Activated naive CD4-positive, alpha-beta T cell treated with anti-CD3 and anti-CD28 coated beads for 36 hours (primary cell): ENCODE measurements at regions of chr12 and their contacts with region 1.

Region 1: GRCh38 chr12:12724661-12725545 is 7.7 kb downstream of the CDKN1B start:
- DNase-seq: peak; percentile 94
- H3K4me3 Mint-ChIP-seq: peak overlapping the region; percentile 85
- H3K27ac Mint-ChIP-seq: peak overlapping the region; percentile 98
- H3K4me1 Mint-ChIP-seq: peaks cover 51% of the 10 kb centered on the region
- H3K27me3 Mint-ChIP-seq: no peaks in the 10 kb centered on the region

Region 2: DNA sequence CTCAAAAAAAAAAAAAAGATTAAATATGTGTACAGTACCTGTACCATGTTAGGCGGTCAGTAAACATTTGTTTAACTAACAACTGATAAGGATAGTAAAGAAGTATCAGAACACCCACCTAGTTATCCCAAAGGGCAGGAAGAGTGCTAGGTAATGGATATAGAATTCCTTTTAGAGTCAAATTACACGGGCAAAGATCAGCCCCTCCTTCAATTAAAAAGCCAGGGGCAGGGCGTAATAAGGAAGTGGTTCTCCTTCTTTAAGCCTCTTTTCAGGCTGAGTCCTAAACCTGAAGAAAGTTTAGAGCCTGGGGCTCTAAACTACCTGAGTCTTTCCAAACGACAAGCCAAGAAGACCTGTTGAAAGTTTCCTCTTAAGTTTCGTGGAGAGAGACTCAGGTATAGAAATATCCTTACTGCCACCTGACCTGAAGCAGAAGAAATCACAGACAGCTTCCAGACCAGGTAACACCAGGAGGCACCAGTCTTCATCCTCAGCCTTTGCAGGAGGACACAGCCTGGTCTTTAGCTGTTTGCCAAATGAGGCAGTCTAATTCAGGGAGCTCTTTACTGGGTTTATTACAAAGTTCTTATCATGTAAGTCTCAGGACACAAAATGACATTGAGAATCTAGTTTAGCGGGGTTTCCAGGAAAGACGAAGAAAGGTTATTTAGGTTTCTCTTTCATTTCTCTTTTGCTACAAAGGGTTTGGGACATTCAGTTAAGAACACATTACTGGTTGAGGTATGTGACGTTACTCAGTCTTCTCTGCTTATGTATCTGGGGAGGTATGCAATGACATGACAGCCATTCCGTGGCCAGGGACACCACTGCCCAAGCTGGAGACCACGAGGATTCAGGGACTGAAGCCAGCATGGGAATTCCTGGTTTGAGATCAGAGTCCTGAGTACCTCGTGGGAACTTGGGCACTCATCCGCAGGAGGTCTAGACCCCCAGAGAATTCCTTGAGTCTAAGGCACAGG is 653.9 kb before region 1 on chr12 and contains the start of gene BCL2L14:
- CTCF ChIA-PET with region 1: no interaction called
- intact Hi-C with region 1: no loop called
- DNase-seq: peak; percentile 52
- H3K4me3 Mint-ChIP-seq: peak within 1 kb of the TSS; percentile 85
- H3K27ac Mint-ChIP-seq: peak within 1 kb of the TSS; percentile 90
- H3K4me1 Mint-ChIP-seq: peaks cover 36% of the 10 kb centered on the region
- H3K27me3 Mint-ChIP-seq: no peaks in the 10 kb centered on the region
- total RNA-seq, gene BCL2L14: 19.4 to 21.8 TPM

Region 3: GRCh38 chr12:12521044-12521485 is 203.8 kb before region 1 on chr12:
- CTCF ChIA-PET with region 1: no interaction called
- intact Hi-C with region 1: no loop called
- DNase-seq: no peak
- H3K4me3 Mint-ChIP-seq: no peak overlapping the region
- H3K27ac Mint-ChIP-seq: no peak overlapping the region
- H3K4me1 Mint-ChIP-seq: peaks cover 15% of the 10 kb centered on the region
- H3K27me3 Mint-ChIP-seq: no peaks in the 10 kb centered on the region

Region 4: DNA sequence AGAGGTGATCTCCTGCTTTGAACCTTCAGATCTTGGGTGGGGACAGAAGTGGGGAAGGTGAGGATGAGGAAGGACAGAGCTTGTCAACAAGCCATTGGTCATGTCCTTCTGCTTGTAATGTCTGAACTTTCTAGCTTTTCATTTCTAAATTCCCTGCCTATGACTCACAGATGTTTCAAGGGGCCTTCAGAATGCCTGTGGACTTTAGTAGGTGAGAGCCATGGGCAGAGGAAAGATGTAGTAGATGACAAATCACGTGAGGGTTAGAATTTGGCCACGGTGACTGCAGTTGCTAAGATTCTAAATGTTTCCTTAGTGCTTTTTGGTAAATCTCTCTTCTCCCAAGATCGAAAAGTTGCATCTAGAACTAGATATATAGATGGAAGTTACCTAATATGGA is 132.0 kb before region 1 on chr12:
- CTCF ChIA-PET with region 1: no interaction called
- intact Hi-C with region 1: no loop called
- DNase-seq: no peak
- H3K4me3 Mint-ChIP-seq: no peak overlapping the region
- H3K27ac Mint-ChIP-seq: no peak overlapping the region
- H3K4me1 Mint-ChIP-seq: peaks cover 4% of the 10 kb centered on the region
- H3K27me3 Mint-ChIP-seq: peaks cover 2% of the 10 kb centered on the region

Region 5: DNA sequence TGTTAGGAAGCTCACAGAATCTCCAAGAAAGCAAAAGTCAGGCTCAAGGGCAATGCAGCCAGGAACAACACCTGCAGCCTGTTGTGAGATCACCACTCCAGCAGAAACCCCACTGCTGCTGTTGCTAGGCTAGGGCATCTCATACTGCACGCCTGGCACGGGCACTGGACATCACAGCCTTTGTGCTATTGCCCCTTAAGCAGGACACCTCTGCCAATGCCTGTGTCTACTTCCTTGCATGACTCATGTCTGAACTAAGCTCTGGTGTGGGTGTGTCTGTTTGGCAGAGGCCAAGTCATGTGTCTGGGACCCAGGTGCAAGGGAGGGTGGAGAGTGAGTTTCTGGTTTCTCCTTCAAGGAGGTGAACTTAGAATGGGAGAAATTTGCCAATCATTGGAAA is 78.3 kb after region 1 on chr12:
- CTCF ChIA-PET with region 1: no interaction called
- intact Hi-C with region 1: loop called (anchors 1 kb)
- DNase-seq: peak; percentile 61
- H3K4me3 Mint-ChIP-seq: no peak overlapping the region
- H3K27ac Mint-ChIP-seq: no peak overlapping the region
- H3K4me1 Mint-ChIP-seq: peaks cover 53% of the 10 kb centered on the region
- H3K27me3 Mint-ChIP-seq: no peaks in the 10 kb centered on the region

Region 6: DNA sequence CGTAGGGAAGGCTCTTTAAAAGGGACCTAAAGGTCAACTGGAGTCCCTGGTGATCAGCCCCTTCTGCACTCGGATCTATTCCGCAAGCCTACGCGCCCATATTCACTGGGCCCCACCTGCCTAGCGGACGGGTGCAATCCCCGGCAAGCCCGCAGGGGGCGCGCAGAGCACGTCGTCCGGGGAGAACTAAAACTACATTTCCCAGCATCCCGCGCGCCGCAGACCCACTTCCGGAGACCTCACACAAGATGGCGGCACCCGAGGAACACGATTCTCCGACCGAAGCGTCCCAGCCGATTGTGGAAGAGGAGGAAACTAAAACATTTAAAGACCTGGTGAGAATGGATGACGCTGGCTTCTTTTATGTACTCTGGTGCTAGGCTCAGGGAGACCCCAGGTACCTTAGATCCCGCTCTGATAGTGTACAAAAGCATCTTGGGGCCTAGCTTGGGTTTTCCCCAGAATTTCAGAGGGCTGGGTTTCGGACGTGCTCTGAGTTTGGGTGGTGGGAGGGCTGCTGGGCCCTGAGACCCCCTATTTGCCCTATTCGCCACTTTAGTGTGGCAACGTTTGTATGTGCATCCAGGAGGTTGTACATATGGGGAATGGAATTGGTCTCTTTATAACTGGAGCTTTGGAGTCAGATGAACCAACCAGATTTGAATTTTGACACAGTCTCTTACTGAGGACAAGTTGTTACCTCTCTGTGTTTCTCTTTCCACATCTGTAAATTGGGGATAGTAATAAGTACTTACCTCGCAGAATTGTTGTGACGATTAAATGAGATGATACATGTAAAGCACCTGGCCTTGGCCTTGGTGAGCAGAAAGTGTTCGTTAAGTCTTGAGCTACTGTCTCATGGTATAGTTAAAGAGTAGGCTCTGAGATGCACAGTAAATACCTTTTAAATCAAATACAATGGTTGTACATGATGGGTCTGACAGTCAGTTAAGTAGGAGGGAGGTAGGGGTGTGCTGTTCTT is 88.5 kb after region 1 on chr12 and contains the start of gene DDX47:
- CTCF ChIA-PET with region 1: no interaction called
- intact Hi-C with region 1: loop called (anchors 1 kb)
- DNase-seq: peak; percentile 99
- H3K4me3 Mint-ChIP-seq: peak within 1 kb of the TSS; percentile 99
- H3K27ac Mint-ChIP-seq: peak within 1 kb of the TSS; percentile 93
- H3K4me1 Mint-ChIP-seq: peaks cover 57% of the 10 kb centered on the region
- H3K27me3 Mint-ChIP-seq: no peaks in the 10 kb centered on the region
- total RNA-seq, gene DDX47: 86.6 to 87.3 TPM